ENCODE measurements at regions of chr22 and their contacts with region 1.

Region 1: DNA sequence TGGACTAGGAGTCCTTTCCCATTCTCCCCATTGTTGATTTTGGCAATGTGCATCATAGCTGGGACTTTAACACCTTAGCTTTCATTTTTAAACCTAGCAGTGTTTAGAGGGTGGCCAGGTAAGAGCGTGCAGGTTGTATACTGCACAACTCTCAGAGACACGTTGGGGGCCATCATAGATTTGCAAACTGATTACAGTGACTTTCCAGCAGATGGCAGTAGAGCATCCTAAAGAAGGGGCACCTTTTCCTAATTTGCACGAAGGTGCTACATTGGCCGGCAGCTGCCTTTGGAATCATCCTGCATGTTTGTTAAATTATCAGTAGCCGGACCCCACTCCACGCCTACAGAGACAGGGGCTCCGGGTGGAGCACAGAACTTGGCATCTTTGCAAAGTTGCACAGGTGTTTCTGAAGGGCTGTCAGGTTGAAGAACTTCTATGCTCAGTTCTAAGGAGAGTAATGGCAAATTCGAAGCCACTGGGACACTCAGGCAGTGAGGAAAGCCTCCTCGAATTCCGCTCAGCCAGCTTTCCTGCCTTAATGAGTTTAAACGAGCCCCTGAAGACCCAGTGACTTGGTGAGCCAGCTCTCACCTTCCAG is 7.7 kb downstream of the LHFPL7 start:
- DNase-seq: peak; percentile 26
- ATAC-seq: peak; percentile 68
- H3K4me3 Mint-ChIP-seq: no peak overlapping the region
- H3K27ac Mint-ChIP-seq: no peak overlapping the region
- H3K4me1 Mint-ChIP-seq: no peaks in the 10 kb centered on the region
- H3K27me3 Mint-ChIP-seq: peaks cover 3% of the 10 kb centered on the region
- CTCF ChIP-seq: peak; percentile 85

Region 2: DNA sequence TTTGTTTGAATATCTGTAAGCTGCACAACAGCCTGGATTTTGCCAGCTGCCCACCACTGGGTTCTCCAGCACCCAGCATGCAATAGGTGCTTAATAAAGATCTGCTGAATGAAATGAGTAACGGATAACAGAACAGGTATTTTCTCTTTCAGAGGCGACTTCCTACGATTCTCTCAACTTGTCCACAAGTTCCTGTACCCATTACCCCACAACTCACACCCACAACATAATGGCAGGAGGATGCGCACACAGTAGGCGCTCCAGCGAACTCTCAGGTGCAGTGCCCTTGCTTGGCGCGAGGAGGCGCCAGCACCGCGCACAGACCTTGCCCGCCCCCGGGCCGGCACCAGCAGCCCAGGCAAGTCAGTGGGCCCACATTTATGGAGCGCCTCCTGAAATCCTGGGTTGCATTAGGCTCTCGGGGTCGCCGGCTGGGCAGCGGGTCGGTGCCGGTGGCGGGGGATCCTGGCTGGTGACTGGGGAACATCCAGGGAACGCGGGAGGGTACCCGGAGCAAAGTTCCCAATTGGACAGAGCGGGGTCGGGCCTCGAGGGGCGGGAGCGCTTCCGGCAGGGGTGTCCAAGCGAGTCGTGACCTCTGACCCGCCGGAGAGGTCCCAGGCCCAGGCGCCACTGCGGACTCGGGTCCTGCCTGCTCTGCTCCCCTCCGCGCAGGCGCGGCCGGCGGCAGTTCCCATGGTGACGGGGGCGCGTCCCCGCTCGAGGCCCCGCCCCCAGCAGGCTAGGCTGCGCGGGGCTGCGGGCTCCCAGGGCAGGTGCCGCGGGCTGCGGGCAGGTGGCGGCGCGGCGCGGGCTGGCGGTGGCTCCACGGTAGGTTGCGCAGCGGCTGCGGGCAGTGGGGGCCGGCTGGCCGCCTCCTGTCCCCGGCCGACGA is 13.3 kb after region 1 on chr22 and contains the start of gene KIAA1671:
- CTCF ChIA-PET with region 1: interaction called, 13 read pairs
- POLR2A ChIA-PET with region 1: no interaction called
- intact Hi-C with region 1: no loop called
- DNase-seq: peak; percentile 81
- ATAC-seq: peak; percentile 96
- H3K4me3 Mint-ChIP-seq: peak within 1 kb of the TSS; percentile 78
- H3K27ac Mint-ChIP-seq: peak within 1 kb of the TSS; percentile 28
- H3K4me1 Mint-ChIP-seq: peaks cover 17% of the 10 kb centered on the region
- H3K27me3 Mint-ChIP-seq: peaks cover 53% of the 10 kb centered on the region
- CTCF ChIP-seq: peak; percentile 99
- total RNA-seq, gene KIAA1671: 6.5 to 6.8 TPM

Region 3: GRCh38 chr22:24975813-24976341 is 37.0 kb after region 1 on chr22:
- CTCF ChIA-PET with region 1: interaction called, 10 read pairs
- POLR2A ChIA-PET with region 1: no interaction called
- intact Hi-C with region 1: no loop called
- DNase-seq: no peak
- ATAC-seq: no peak
- H3K4me3 Mint-ChIP-seq: no peak overlapping the region
- H3K27ac Mint-ChIP-seq: no peak overlapping the region
- H3K4me1 Mint-ChIP-seq: no peaks in the 10 kb centered on the region
- H3K27me3 Mint-ChIP-seq: no peaks in the 10 kb centered on the region
- CTCF ChIP-seq: no peak

Region 4: GRCh38 chr22:25048659-25049647 is 110.1 kb after region 1 on chr22:
- CTCF ChIA-PET with region 1: interaction called, 110 read pairs
- POLR2A ChIA-PET with region 1: interaction called, 3 read pairs
- intact Hi-C with region 1: loop called (anchors 5 kb)
- DNase-seq: peak; percentile 83
- ATAC-seq: peak; percentile 98
- H3K4me3 Mint-ChIP-seq: no peak overlapping the region
- H3K27ac Mint-ChIP-seq: no peak overlapping the region
- H3K4me1 Mint-ChIP-seq: peaks cover 6% of the 10 kb centered on the region
- H3K27me3 Mint-ChIP-seq: no peaks in the 10 kb centered on the region
- CTCF ChIP-seq: peak; percentile 80

Measured in activated CD8-positive, alpha-beta T cell treated with anti-CD3 and anti-CD28 coated beads for 36 hours (primary cell).